ENCODE measurements at regions of chr1 and their contacts with region 1.

Region 1: DNA sequence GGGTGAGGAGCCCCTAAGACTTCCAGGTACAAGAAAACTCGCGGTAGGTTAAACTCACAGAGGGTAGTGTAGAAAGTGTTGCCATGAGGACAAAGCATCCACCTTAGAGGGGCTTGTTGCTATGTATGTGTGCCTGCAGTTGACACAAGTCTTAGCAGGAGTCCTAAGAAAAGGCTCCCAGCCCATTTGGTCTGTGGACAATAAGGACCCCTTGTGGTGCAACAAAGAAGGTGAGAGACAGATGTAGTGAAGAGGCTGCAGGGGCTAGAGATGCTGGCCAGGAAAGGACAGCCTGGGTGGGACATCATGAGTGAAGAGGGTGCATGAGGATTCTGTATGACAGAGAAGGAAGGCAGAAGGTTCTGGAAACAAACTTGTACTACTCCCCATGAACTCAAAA is 36.3 kb upstream of the IL10 start:
- DNase-seq: peak; percentile 66
- H3K4me3 Mint-ChIP-seq: no peak overlapping the region
- H3K27ac Mint-ChIP-seq: no peak overlapping the region
- H3K4me1 Mint-ChIP-seq: peaks cover 46% of the 10 kb centered on the region
- H3K27me3 Mint-ChIP-seq: peaks cover 9% of the 10 kb centered on the region

Region 2: GRCh38 chr1:206725109-206725963 is 83.3 kb before region 1 on chr1:
- CTCF ChIA-PET with region 1: interaction called, 361 read pairs
- DNase-seq: peak; percentile 80
- H3K4me3 Mint-ChIP-seq: no peak overlapping the region
- H3K27ac Mint-ChIP-seq: no peak overlapping the region
- H3K4me1 Mint-ChIP-seq: peaks cover 26% of the 10 kb centered on the region
- H3K27me3 Mint-ChIP-seq: no peaks in the 10 kb centered on the region

Region 3: GRCh38 chr1:206784471-206784903 is 24.1 kb before region 1 on chr1:
- CTCF ChIA-PET with region 1: interaction called, 13 read pairs
- DNase-seq: peak; percentile 93
- H3K4me3 Mint-ChIP-seq: peak overlapping the region; percentile 51
- H3K27ac Mint-ChIP-seq: peak overlapping the region; percentile 84
- H3K4me1 Mint-ChIP-seq: peaks cover 62% of the 10 kb centered on the region
- H3K27me3 Mint-ChIP-seq: peaks cover 45% of the 10 kb centered on the region

Region 4: DNA sequence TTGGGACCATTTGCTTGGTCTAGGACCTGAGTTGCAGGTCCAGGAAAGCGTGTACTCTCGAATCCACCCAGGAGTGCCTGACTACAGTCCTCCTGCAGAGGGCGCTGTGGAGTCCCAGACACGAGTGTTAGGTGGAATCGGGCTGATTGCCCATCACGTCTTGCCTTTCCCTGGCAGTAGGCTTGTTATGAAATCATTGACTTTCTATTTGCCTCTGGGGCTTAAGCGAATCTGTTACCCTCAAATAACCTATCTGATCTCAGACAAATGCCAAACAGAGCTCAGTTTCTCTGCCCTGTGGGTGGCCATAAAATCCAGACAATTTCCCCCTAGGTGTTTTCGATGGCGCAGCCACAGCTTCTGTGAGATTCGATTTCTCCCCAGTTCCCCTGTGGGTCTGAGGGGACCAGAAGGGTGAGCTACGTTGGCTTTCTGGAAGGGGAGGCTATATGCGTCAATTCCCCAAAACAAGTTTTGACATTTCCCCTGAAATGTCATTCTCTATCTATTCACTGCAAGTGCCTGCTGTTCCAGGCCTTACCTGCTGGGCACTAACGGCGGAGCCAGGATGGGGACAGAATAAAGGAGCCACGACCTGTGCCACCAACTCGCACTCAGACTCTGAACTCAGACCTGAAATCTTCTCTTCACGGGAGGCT is 56.5 kb after region 1 on chr1 and contains the start of gene IL20:
- CTCF ChIA-PET with region 1: interaction called, 24 read pairs
- DNase-seq: peak; percentile 84
- H3K4me3 Mint-ChIP-seq: no peak within 1 kb of the TSS
- H3K27ac Mint-ChIP-seq: no peak within 1 kb of the TSS
- H3K4me1 Mint-ChIP-seq: peaks cover 7% of the 10 kb centered on the region
- H3K27me3 Mint-ChIP-seq: peaks cover 62% of the 10 kb centered on the region

Region 5: GRCh38 chr1:206935491-206936067 is 127.0 kb after region 1 on chr1:
- CTCF ChIA-PET with region 1: interaction called, 21 read pairs
- DNase-seq: peak; percentile 74
- H3K4me3 Mint-ChIP-seq: no peak overlapping the region
- H3K27ac Mint-ChIP-seq: no peak overlapping the region
- H3K4me1 Mint-ChIP-seq: peaks cover 14% of the 10 kb centered on the region
- H3K27me3 Mint-ChIP-seq: peaks cover 35% of the 10 kb centered on the region

Region 6: GRCh38 chr1:207134581-207134980 is 326.0 kb after region 1 on chr1:
- CTCF ChIA-PET with region 1: no interaction called
- DNase-seq: no peak
- H3K4me3 Mint-ChIP-seq: no peak overlapping the region
- H3K27ac Mint-ChIP-seq: no peak overlapping the region
- H3K4me1 Mint-ChIP-seq: no peaks in the 10 kb centered on the region
- H3K27me3 Mint-ChIP-seq: no peaks in the 10 kb centered on the region